ENCODE measurements at regions of chr15 and their contacts with region 1.

Region 1: DNA sequence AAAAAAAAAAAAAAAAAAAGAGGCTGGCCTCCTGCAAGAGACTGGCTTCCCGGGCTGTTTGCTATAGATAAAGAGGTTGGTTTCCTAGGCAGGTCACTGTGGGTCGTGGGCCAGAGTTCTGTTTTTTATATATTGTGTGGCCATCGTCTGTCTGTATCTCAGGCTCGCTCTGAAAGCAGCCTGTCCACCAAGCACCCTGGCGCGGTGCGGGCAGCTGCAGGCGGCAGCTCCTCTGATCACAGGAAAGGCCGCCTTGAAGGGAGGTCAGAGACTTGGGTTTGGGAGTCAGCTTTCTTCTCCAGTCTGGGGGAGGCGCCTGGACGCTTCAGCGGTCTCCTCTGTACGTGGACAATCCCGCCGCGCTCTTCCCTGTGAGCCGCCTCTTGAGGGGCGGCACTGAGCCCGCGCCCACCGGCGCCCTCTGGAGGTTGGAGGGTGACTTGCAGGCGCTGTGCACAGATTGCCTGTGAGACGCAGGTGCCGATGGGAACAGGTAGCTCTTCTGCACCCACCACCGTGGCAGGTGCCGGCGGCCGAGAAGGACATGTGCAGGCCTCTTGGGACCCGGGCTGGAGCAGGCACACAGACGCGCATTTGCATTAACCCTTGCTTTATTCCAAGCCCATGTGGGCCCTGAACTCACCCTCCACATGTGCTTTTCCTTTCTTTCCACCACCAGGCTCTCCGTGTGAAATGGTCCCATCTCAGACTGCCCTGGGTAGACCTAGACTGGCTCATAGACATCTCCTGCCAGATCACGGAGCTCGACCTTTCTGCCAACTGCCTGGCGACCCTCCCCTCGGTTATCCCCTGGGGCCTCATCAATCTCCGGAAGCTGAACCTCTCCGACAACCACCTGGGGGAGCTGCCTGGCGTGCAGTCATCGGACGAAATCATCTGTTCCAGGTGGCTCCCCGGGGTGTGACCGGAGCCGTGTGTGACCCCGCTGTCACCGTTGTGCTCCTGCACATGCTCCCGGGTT is 89.3 kb downstream of the LRRK1 start:
- DNase-seq: peak; percentile 23
- H3K4me3 ChIP-seq: peak overlapping the region; percentile 33 to 69 (median 52)
- H3K27ac ChIP-seq: peak overlapping the region in 2 of 4 donors; percentile 23 to 71
- H3K4me1 ChIP-seq: peaks cover 0 to 26% (median 16%) of the 10 kb centered on the region in 3 donors
- H3K27me3 ChIP-seq: no peaks in the 10 kb centered on the region
- CTCF ChIP-seq: peak; percentile 94 to 97 (median 96)
- POLR2A ChIP-seq: no peak

Region 2: DNA sequence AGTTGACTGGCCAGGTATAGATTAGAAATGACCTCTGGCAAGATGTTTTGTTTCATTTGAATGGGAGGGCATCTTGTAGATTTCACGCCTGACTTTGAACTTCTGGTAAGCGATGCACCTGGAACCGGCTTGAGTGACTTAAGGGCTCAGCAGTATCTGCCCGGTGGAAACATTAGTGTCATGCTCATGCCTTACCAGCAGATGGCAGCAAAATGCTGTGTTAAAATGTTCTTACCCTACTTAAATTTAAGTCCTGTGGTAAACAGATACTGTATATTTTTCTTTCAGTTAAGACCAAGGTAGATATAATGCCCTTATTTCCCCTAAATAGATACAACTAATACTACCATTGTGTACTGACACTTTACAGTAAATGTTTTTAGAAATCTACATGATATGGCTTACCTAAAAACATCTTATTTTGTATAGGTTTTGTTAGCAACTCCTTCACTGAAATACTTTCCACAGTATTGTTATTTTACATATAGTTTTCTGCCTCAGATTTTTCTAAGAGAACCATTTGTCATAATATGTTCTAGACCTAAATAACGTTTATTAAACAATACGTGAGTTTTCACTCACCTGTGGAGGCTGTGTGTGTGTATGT is 380.6 kb before region 1 on chr15:
- intact Hi-C with region 1: loop called (anchors 5 kb)
- DNase-seq: no peak
- H3K4me3 ChIP-seq: no peak overlapping the region
- H3K27ac ChIP-seq: no peak overlapping the region
- H3K4me1 ChIP-seq: no peaks in the 10 kb centered on the region
- H3K27me3 ChIP-seq: no peaks in the 10 kb centered on the region
- CTCF ChIP-seq: peak; percentile 60 to 90 (median 82)
- POLR2A ChIP-seq: no peak

Region 3: DNA sequence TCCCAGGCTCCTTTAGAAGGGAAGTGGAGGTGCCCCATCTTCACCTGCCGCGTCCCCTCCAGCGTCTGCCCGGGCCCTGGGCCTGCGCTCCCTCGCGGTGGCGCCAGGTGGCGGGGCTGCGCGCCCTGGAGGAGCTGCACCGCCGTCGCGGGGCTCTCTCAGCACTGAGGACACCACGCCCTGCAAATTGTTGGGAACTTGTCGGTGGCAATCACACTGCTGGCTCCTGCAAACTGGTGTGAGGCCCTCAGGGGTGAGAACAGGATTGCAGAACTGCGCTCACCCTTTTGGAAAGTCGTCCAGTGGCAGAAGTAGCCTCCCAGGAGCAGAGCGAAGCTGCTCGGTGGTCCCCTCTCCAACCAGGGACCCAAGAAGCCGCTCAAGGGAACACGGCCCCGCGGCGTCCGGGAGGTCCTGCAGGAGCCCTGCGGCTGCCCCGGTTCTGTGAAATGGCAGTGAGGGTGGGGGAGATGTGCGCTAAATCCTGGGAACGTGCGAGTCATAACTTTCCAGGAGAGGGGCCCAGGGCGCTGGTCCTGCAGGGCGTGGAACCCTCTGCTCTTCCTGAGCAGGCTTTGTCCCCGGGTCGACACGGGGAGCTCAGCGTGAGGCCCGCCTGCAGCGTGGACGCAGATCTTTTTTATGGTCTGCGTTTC is 90.3 kb before region 1 on chr15:
- intact Hi-C with region 1: loop called (anchors 5 kb)
- DNase-seq: no peak
- H3K4me3 ChIP-seq: peak overlapping the region; percentile 67 to 90 (median 80)
- H3K27ac ChIP-seq: peak overlapping the region; percentile 73 to 88 (median 82)
- H3K4me1 ChIP-seq: peaks cover 10 to 52% (median 20%) of the 10 kb centered on the region in 3 donors
- H3K27me3 ChIP-seq: no peaks in the 10 kb centered on the region
- CTCF ChIP-seq: peak; percentile 79 to 98 (median 94)
- POLR2A ChIP-seq: peak in 1 of 4 donors; percentile 31

Measured in esophagus squamous epithelium (tissue), 5 donors.